CD4-positive, alpha-beta T cell (primary cell): ENCODE measurements at regions of chr19 and their contacts with region 1.

Region 1: DNA sequence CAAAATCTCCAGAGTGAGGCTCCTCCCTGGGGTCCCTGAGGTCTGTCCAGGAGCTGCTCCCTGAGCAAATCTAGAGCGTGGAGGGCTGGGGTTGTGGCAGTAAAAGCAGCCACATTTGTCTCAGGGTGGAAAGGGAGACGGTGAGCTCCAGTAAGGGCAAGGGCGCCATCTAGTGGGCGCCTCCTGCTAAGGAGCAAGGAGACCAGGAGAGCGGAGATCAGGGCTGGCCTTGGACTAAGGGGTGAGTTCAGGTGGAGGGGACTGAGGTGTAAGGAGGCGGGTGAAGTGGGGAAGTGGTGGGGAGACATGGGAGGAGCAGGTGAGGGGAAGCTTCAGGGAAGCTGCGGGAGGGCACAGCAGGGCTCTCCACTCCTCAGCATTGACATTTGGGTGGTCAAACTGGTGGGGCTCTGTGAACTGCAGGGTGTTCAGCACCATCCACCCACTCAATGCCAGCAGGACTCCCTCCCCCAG is 5.3 kb upstream of the CEACAM21 start:
- DNase-seq: peak; percentile 74 to 93 (median 84)
- ATAC-seq: peak; percentile 97
- H3K4me3 ChIP-seq: no peak overlapping the region
- H3K4me3 Mint-ChIP-seq: no peak overlapping the region
- H3K27ac ChIP-seq: no peak overlapping the region
- H3K27ac Mint-ChIP-seq: peak overlapping the region; percentile 34
- H3K4me1 ChIP-seq: peaks cover 20% of the 10 kb centered on the region
- H3K4me1 Mint-ChIP-seq: peaks cover 44% of the 10 kb centered on the region
- H3K27me3 ChIP-seq: no peaks in the 10 kb centered on the region
- H3K27me3 Mint-ChIP-seq: no peaks in the 10 kb centered on the region
- CTCF ChIP-seq: peak; percentile 95

Region 2: GRCh38 chr19:41449079-41449864 is 121.4 kb before region 1 on chr19:
- CTCF ChIA-PET with region 1: interaction called, 39 read pairs
- POLR2A ChIA-PET with region 1: interaction called, 7 read pairs
- intact Hi-C with region 1: loop called (anchors 1 kb)
- DNase-seq: peak; percentile 45 to 83 (median 62)
- ATAC-seq: peak; percentile 93
- H3K4me3 ChIP-seq: peak overlapping the region; percentile 32
- H3K4me3 Mint-ChIP-seq: peak overlapping the region; percentile 73
- H3K27ac ChIP-seq: no peak overlapping the region
- H3K27ac Mint-ChIP-seq: no peak overlapping the region
- H3K4me1 ChIP-seq: peaks cover 20% of the 10 kb centered on the region
- H3K4me1 Mint-ChIP-seq: no peaks in the 10 kb centered on the region
- H3K27me3 ChIP-seq: peaks cover 4 to 8% of the 10 kb centered on the region in 2 experiments
- H3K27me3 Mint-ChIP-seq: peaks cover 23% of the 10 kb centered on the region
- CTCF ChIP-seq: peak; percentile 98

Region 3: DNA sequence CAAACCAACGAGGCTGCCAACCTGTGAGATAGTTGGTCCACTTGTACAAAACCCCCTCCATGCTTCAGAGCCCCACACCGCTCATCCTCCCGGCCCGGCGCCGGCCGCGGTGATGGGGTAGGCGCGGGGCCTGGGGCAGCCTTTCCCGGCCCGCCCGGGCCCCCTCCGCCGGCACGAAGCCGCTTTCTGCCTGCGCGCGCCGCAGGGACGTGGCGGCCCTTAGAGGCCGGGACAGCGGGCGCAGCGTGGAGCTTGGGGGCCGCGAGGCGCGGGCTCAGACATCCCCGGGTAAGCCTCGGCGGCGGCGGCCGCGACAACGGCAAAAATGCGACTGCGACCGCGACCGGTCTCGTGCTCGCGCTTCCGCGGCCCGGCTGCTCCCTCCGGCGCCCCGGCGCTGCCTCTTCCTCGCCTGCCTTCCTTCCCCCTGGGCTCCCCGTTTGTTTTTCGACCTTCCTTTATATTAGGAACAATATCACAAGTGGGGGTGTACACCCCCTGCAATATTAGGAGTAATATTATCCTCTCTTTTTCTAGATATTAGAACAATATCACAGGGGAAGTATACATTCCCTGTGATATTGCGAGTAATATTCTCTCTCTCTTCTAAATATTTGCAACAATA is 48.6 kb before region 1 on chr19:
- CTCF ChIA-PET with region 1: interaction called, 7 read pairs
- POLR2A ChIA-PET with region 1: no interaction called
- intact Hi-C with region 1: loop called in 1 of 2 experiments (anchors 2 kb)
- DNase-seq: peak in 10 of 14 experiments; percentile 26 to 79 (median 50)
- ATAC-seq: peak; percentile 71
- H3K4me3 ChIP-seq: peak overlapping the region; percentile 52
- H3K4me3 Mint-ChIP-seq: peak overlapping the region; percentile 91
- H3K27ac ChIP-seq: peak overlapping the region; percentile 34 to 36
- H3K27ac Mint-ChIP-seq: peak overlapping the region; percentile 76
- H3K4me1 ChIP-seq: peaks cover 9% of the 10 kb centered on the region
- H3K4me1 Mint-ChIP-seq: peaks cover 26% of the 10 kb centered on the region
- H3K27me3 ChIP-seq: peaks cover 0 to 4% of the 10 kb centered on the region in 2 experiments
- H3K27me3 Mint-ChIP-seq: peaks cover 73% of the 10 kb centered on the region
- CTCF ChIP-seq: no peak

Region 4: GRCh38 chr19:41541990-41542584 is 28.6 kb before region 1 on chr19:
- CTCF ChIA-PET with region 1: interaction called, 14 read pairs
- POLR2A ChIA-PET with region 1: interaction called, 286 read pairs
- intact Hi-C with region 1: no loop called
- DNase-seq: peak; percentile 55 to 89 (median 78)
- ATAC-seq: no peak
- H3K4me3 ChIP-seq: no peak overlapping the region
- H3K4me3 Mint-ChIP-seq: peak overlapping the region; percentile 65
- H3K27ac ChIP-seq: no peak overlapping the region
- H3K27ac Mint-ChIP-seq: peak overlapping the region; percentile 66
- H3K4me1 ChIP-seq: peaks cover 46% of the 10 kb centered on the region
- H3K4me1 Mint-ChIP-seq: peaks cover 48% of the 10 kb centered on the region
- H3K27me3 ChIP-seq: no peaks in the 10 kb centered on the region
- H3K27me3 Mint-ChIP-seq: no peaks in the 10 kb centered on the region
- CTCF ChIP-seq: peak; percentile 92

Region 5: GRCh38 chr19:41597600-41598041 is 26.9 kb after region 1 on chr19:
- CTCF ChIA-PET with region 1: interaction called, 12 read pairs
- POLR2A ChIA-PET with region 1: no interaction called
- intact Hi-C with region 1: no loop called
- DNase-seq: peak; percentile 50 to 87 (median 68)
- ATAC-seq: peak; percentile 87
- H3K4me3 ChIP-seq: no peak overlapping the region
- H3K4me3 Mint-ChIP-seq: no peak overlapping the region
- H3K27ac ChIP-seq: no peak overlapping the region
- H3K27ac Mint-ChIP-seq: no peak overlapping the region
- H3K4me1 ChIP-seq: peaks cover 4% of the 10 kb centered on the region
- H3K4me1 Mint-ChIP-seq: peaks cover 12% of the 10 kb centered on the region
- H3K27me3 ChIP-seq: peaks cover 0 to 4% of the 10 kb centered on the region in 2 experiments
- H3K27me3 Mint-ChIP-seq: peaks cover 15% of the 10 kb centered on the region
- CTCF ChIP-seq: peak; percentile 94